Gastrocnemius medialis (tissue), 4 donors: ENCODE measurements at regions of chr1 and their contacts with region 1.

Region 1: DNA sequence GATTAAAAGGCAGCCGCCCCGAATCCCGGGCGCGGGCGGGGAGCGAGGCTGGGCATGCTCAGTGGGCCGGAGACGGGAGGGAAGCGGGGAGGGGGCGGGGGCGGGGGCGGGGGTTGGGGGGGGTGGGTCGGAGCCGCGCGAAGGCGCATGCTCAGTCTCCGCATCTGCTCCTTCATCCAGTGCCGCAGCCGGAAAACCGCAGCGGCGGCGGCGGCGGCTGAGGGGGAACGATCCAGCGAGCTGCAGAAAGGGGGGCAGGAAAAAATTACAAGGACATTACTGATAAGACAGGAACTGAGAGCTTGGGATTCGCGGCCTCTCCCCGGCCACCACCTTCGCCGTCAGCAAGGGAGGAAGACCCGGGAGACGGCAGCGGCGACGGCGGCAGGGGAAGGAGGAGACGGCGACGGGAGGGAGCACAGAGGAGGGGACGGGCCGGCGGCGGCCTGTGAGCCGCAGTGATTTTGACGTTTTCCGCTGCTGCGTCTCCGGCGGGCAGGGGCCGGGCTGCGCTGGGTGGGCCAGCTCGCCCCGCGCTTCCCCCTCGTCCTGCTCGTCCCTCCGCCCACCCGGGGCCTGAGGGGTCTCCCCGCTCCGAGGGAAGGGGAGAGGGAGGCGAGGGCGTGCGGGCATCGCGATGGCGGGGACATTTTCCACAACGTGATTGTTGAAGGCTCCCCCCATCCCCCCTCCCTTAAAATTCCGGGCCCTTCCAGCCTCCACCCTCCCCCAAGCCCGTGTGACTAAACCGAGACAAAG is at the start of gene CAMSAP2:
- DNase-seq: peak; percentile 65 to 78
- ATAC-seq: peak; percentile 88 to 91
- H3K4me3 ChIP-seq: peak within 1 kb of the TSS; percentile 71 to 98 (median 94)
- H3K27ac ChIP-seq: peak within 1 kb of the TSS; percentile 93 to 100 (median 98)
- H3K4me1 ChIP-seq: peaks cover 28 to 34% of the 10 kb centered on the region in 2 donors
- H3K27me3 ChIP-seq: no peaks in the 10 kb centered on the region
- CTCF ChIP-seq: no peak
- POLR2A ChIP-seq: peak; percentile 89 to 90
- total RNA-seq, gene CAMSAP2: 39.3 to 63.9 (median 54.2) TPM

Region 2: GRCh38 chr1:200669314-200670241 is 69.3 kb before region 1 on chr1 and contains the start of gene DDX59:
- in situ Hi-C with region 1: loop called in 1 of 4 experiments (anchors 10 kb)
- intact Hi-C with region 1: loop called (anchors 1 kb)
- DNase-seq: peak; percentile 92 to 95
- ATAC-seq: peak; percentile 86 to 87
- H3K4me3 ChIP-seq: peak within 1 kb of the TSS; percentile 77 to 95 (median 90)
- H3K27ac ChIP-seq: peak within 1 kb of the TSS; percentile 98 to 99 (median 99)
- H3K4me1 ChIP-seq: peaks cover 22 to 29% of the 10 kb centered on the region in 2 donors
- H3K27me3 ChIP-seq: no peaks in the 10 kb centered on the region
- CTCF ChIP-seq: peak in 1 of 5 experiments; percentile 21
- POLR2A ChIP-seq: peak; percentile 94
- total RNA-seq, gene DDX59: 36.7 to 52.7 (median 39.5) TPM

Region 3: DNA sequence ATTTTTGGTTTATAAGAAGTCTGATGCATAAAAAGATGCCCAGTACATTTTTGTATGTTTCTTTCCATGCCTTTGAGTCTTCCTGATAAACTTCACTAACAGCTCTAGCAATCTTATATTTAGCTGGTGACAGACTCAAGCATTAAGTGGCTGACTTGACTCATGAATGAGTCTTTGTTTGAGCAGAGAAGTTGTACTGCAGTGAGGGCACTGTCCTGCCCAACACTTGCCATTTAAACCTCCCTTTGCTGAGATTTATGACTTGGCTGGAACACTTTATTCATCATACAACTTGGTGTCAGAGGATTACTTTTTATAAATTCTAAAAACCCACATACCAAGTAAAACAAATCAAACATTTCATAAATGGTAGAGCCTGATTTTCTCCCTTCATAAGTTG is 14.9 kb before region 1 on chr1:
- in situ Hi-C with region 1: no loop called
- intact Hi-C with region 1: no loop called
- DNase-seq: no peak
- ATAC-seq: no peak
- H3K4me3 ChIP-seq: no peak overlapping the region
- H3K27ac ChIP-seq: no peak overlapping the region
- H3K4me1 ChIP-seq: no peaks in the 10 kb centered on the region
- H3K27me3 ChIP-seq: no peaks in the 10 kb centered on the region
- CTCF ChIP-seq: no peak
- POLR2A ChIP-seq: no peak

Region 4: GRCh38 chr1:200780545-200781369 is 41.8 kb after region 1 on chr1:
- in situ Hi-C with region 1: no loop called
- intact Hi-C with region 1: loop called (anchors 5 kb)
- DNase-seq: no peak
- ATAC-seq: no peak
- H3K4me3 ChIP-seq: peak overlapping the region; percentile 2 to 19 (median 18)
- H3K27ac ChIP-seq: peak overlapping the region in 3 of 4 donors; percentile 19 to 30 (median 26)
- H3K4me1 ChIP-seq: peaks cover 18 to 27% of the 10 kb centered on the region in 2 donors
- H3K27me3 ChIP-seq: no peaks in the 10 kb centered on the region
- CTCF ChIP-seq: no peak
- POLR2A ChIP-seq: no peak

Region 5: GRCh38 chr1:200802865-200803512 is 64.1 kb after region 1 on chr1:
- in situ Hi-C with region 1: no loop called
- intact Hi-C with region 1: loop called (anchors 2 kb)
- DNase-seq: peak; percentile 29 to 59
- ATAC-seq: peak; percentile 72 to 88
- H3K4me3 ChIP-seq: no peak overlapping the region
- H3K27ac ChIP-seq: no peak overlapping the region
- H3K4me1 ChIP-seq: peaks cover 0 to 4% of the 10 kb centered on the region in 2 donors
- H3K27me3 ChIP-seq: no peaks in the 10 kb centered on the region
- CTCF ChIP-seq: peak; percentile 84 to 94 (median 88)
- POLR2A ChIP-seq: no peak

Region 6: GRCh38 chr1:201114236-201115131 is 375.6 kb after region 1 on chr1:
- in situ Hi-C with region 1: no loop called
- intact Hi-C with region 1: no loop called
- DNase-seq: peak; percentile 85 to 94
- ATAC-seq: peak; percentile 85 to 92
- H3K4me3 ChIP-seq: peak overlapping the region; percentile 59 to 84 (median 67)
- H3K27ac ChIP-seq: peak overlapping the region; percentile 89 to 98 (median 96)
- H3K4me1 ChIP-seq: peaks cover 38 to 47% of the 10 kb centered on the region in 2 donors
- H3K27me3 ChIP-seq: no peaks in the 10 kb centered on the region
- CTCF ChIP-seq: peak; percentile 86 to 97 (median 93)
- POLR2A ChIP-seq: peak; percentile 12 to 58